ENCODE measurements at regions of chr12 and their contacts with region 1.

Region 1: DNA sequence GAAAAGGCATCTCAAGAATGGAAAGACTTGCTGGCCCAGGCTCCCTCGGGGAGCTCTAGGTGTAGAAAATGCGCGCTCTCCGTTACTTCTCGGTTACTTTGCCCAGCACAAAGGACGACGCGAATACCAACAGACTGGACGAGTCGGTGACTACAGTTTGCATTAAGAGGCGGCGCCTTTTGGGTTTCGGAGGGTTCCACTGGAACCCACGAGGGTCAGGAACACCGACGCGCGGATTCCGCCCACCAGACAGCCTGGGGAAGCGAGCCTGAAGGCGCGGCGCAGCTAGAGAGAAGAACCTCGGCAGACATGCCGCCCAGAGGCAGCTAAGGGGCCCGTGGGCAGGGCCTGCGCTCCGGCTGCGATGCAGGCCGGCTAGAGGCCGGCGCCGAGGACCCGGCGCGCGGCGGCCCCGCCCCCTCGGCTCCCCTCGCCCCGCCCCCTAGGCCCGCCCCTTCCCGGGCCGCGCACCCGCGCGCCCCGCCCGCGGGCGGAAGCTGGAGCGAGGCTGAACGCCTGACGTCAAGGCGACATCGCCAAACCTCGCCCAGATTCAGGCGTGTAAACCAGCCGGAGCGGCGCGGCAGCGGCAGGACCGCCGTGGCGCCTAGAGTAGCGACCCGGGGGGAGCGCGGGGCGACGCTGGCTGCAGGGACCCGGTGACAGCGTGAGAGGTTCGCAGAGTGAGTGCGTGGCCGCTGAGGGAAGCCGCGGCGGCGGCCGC is at the start of gene RAP1B:
- DNase-seq: peak; percentile 97
- H3K4me3 Mint-ChIP-seq: peak within 1 kb of the TSS; percentile 99
- H3K27ac Mint-ChIP-seq: peak within 1 kb of the TSS; percentile 98
- H3K4me1 Mint-ChIP-seq: peaks cover 37% of the 10 kb centered on the region
- H3K27me3 Mint-ChIP-seq: no peaks in the 10 kb centered on the region
- total RNA-seq, gene RAP1B: 207 and 209 TPM in 2 replicates

Region 2: DNA sequence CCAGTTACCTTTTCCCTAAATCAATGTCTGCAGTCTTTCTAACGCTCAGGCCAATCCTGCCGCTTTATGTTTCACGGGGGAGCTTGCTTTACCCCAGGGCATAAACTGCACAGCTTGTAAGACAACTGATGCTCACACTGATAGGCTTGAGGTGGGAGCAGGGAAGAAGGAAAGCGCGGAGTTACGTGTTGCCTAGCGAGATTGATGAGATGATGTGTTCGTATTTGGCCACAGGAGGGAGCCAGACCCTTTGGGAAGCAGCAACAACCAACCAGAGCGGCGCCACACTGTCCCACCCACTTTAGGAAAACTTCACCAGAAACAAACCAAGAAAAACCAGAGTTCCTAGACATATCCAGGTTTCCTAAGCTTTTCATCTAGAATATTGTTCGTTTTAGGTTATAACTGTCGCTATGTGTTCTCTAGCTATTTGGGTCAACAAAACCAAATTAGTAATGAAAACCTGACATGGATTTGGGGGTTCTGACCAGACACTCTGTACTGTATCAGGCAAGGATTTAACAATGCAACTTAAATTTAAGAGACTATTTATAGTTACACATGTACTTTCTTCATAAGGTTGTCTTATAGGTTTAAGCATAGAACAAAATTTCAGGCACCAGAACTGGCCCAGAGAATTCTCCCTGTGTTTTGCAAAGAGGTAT is 387.3 kb before region 1 on chr12:
- intact Hi-C with region 1: loop called (anchors 1 kb)
- DNase-seq: peak; percentile 91
- H3K4me3 Mint-ChIP-seq: peak overlapping the region; percentile 75
- H3K27ac Mint-ChIP-seq: peak overlapping the region; percentile 81
- H3K4me1 Mint-ChIP-seq: peaks cover 17% of the 10 kb centered on the region
- H3K27me3 Mint-ChIP-seq: peaks cover 14% of the 10 kb centered on the region

Region 3: GRCh38 chr12:68364893-68365725 is 245.4 kb before region 1 on chr12:
- intact Hi-C with region 1: loop called (anchors 1 kb)
- DNase-seq: peak; percentile 95
- H3K4me3 Mint-ChIP-seq: peak overlapping the region; percentile 83
- H3K27ac Mint-ChIP-seq: peak overlapping the region; percentile 95
- H3K4me1 Mint-ChIP-seq: peaks cover 56% of the 10 kb centered on the region
- H3K27me3 Mint-ChIP-seq: no peaks in the 10 kb centered on the region

Region 4: GRCh38 chr12:68482660-68483059 is 127.9 kb before region 1 on chr12:
- intact Hi-C with region 1: loop called (anchors 1 kb)
- DNase-seq: peak; percentile 84
- H3K4me3 Mint-ChIP-seq: peak overlapping the region; percentile 46
- H3K27ac Mint-ChIP-seq: peak overlapping the region; percentile 92
- H3K4me1 Mint-ChIP-seq: peaks cover 34% of the 10 kb centered on the region
- H3K27me3 Mint-ChIP-seq: no peaks in the 10 kb centered on the region

Region 5: DNA sequence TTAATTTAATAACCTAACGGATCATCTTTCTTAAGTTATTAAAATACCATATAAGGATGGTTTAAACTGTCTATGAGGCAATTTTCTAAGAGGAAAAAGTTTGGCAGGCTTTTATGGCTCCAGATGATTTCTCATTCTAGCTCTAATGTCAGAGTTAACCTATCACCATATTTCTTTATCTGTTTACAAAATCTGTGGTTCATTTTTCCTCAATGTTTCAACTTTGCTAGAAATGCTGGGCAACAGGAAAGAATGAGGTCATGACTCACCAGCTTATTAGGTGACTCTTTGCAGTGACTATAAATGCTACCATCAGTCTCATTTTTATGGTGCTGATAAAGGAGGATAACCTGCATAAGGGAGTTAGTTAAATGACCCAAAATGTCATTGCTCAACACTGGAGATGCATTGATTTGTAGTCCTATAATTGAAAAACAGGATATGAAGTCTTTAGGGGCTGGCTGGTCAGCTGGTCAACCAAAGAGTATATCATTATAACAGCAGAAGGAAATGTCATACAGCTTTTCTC is 45.1 kb before region 1 on chr12:
- intact Hi-C with region 1: loop called (anchors 2 kb)
- DNase-seq: peak; percentile 66
- H3K4me3 Mint-ChIP-seq: peak overlapping the region; percentile 22
- H3K27ac Mint-ChIP-seq: peak overlapping the region; percentile 18
- H3K4me1 Mint-ChIP-seq: peaks cover 21% of the 10 kb centered on the region
- H3K27me3 Mint-ChIP-seq: no peaks in the 10 kb centered on the region

Region 6: DNA sequence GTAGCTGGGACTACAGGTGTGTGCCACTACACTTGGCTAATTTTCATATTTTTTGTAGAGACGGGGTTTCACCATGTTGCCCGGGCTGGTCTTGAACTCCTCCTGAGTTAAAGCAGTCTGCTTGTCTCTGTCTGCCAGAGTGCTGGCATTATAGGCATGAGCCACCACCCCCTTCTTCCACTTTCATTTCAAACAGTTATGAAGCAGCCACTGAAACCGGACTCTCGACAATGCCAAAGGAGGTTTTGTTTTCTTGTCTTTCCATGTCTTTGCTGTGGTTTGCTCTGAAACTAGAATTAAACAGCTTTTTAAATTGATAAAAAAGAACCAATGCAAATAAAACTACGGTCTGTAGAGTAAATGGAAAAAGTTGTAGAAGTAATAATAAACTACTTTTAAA is 30.6 kb after region 1 on chr12:
- intact Hi-C with region 1: loop called (anchors 1 kb)
- DNase-seq: peak; percentile 86
- H3K4me3 Mint-ChIP-seq: peak overlapping the region; percentile 64
- H3K27ac Mint-ChIP-seq: peak overlapping the region; percentile 60
- H3K4me1 Mint-ChIP-seq: peaks cover 48% of the 10 kb centered on the region
- H3K27me3 Mint-ChIP-seq: no peaks in the 10 kb centered on the region

Region 7: GRCh38 chr12:69157023-69157655 is 546.6 kb after region 1 on chr12:
- intact Hi-C with region 1: loop called (anchors 10 kb)
- DNase-seq: peak; percentile 98
- H3K4me3 Mint-ChIP-seq: peak overlapping the region; percentile 48
- H3K27ac Mint-ChIP-seq: peak overlapping the region; percentile 72
- H3K4me1 Mint-ChIP-seq: peaks cover 37% of the 10 kb centered on the region
- H3K27me3 Mint-ChIP-seq: no peaks in the 10 kb centered on the region